OCI-LY7 (cell line): ENCODE measurements at regions of chr3 and their contacts with region 1.

Region 1: DNA sequence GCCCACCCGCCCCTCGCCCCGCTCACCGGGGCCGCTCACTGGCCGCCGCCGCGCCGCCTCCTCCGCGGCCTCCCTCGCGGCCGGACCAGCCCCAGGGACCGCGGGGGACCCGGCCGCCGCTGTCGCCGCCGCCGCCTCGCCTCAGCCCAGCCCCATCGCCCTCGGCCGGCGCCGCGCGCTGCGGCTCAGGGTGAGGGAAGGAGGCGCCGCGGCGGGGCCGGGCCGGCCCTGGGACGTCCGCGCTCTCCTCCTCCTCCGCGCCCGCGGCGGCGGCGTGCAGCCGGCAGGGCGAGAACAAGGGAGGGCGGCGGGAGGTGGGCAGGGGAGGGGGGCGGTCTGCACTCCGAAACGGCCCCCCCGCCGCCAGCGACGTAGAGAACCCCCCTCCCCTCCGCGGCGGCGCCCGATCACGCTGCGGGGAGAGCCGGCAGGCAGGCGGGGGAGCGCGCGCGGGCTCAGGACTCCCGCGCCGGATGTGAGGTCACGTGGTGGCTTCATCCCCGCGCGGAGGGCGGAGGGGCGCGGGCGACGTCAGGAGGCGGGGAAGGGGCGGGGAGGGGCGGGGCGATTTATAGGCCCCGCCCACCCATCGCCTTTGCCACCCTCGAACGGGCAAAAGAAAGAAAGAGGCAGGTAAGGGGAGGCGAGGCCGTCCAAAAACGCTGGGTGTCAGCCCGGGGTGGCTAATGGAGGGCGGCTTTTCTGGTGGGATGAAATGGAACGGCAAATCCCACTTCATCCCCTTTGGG is at the start of gene ATP13A3:
- DNase-seq: peak; percentile 96
- H3K4me3 ChIP-seq: peak within 1 kb of the TSS; percentile 73
- H3K27ac ChIP-seq: peak within 1 kb of the TSS; percentile 41
- H3K4me1 ChIP-seq: peaks cover 36% of the 10 kb centered on the region
- CTCF ChIP-seq: no peak
- total RNA-seq, gene ATP13A3: 84.5 and 103 TPM in 2 replicates

Region 2: GRCh38 chr3:194536871-194537637 is 50.3 kb after region 1 on chr3:
- CTCF ChIA-PET with region 1: no interaction called
- POLR2A ChIA-PET with region 1: no interaction called
- intact Hi-C with region 1: no loop called
- DNase-seq: no peak
- H3K4me3 ChIP-seq: no peak overlapping the region
- H3K27ac ChIP-seq: no peak overlapping the region
- H3K4me1 ChIP-seq: no peaks in the 10 kb centered on the region
- CTCF ChIP-seq: no peak

Region 3: DNA sequence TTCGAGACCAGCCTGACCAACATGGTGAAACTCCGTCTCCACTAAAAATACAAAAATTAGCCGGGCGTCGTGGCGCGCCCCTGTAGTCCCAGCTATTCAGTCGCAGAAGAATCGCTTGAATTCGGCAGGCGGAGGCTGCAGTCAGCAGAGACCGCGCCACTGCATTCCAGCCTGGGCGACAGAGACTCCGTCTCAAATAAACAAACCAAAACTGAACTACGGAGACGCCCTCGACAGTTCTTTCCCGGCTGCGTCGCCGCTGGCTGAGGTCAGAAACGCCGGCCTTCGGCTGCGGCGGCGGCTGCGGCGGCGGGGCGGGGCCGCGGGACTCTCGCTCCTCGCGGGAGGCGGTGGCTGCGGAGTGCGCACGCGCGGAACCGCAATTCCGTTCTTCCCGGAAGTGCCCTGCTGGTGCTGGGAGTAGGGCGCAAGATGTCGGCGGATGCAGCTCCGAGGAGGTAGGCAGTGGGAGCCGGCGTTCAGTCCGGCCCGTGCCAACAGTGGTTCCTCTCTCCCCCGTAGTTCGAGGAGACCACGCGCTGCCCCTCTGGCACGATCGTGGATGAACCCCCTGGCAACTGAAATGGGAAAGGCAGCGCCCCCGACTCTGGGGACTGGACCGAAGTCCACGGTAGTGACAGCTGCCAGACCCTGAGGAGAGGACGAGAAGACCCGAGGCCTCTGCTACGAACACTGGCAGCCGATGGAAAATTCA is 97.0 kb after region 1 on chr3:
- CTCF ChIA-PET with region 1: no interaction called
- POLR2A ChIA-PET with region 1: no interaction called
- intact Hi-C with region 1: loop called (anchors 5 kb)
- DNase-seq: peak; percentile 94
- H3K4me3 ChIP-seq: peak overlapping the region; percentile 91
- H3K27ac ChIP-seq: peak overlapping the region; percentile 24
- H3K4me1 ChIP-seq: peaks cover 11% of the 10 kb centered on the region
- CTCF ChIP-seq: no peak

Region 4: GRCh38 chr3:194769020-194769643 is 282.4 kb after region 1 on chr3:
- CTCF ChIA-PET with region 1: no interaction called
- POLR2A ChIA-PET with region 1: no interaction called
- intact Hi-C with region 1: loop called (anchors 5 kb)
- DNase-seq: peak; percentile 98
- H3K4me3 ChIP-seq: peak overlapping the region; percentile 58
- H3K27ac ChIP-seq: peak overlapping the region; percentile 27
- H3K4me1 ChIP-seq: peaks cover 15% of the 10 kb centered on the region
- CTCF ChIP-seq: no peak

Region 5: DNA sequence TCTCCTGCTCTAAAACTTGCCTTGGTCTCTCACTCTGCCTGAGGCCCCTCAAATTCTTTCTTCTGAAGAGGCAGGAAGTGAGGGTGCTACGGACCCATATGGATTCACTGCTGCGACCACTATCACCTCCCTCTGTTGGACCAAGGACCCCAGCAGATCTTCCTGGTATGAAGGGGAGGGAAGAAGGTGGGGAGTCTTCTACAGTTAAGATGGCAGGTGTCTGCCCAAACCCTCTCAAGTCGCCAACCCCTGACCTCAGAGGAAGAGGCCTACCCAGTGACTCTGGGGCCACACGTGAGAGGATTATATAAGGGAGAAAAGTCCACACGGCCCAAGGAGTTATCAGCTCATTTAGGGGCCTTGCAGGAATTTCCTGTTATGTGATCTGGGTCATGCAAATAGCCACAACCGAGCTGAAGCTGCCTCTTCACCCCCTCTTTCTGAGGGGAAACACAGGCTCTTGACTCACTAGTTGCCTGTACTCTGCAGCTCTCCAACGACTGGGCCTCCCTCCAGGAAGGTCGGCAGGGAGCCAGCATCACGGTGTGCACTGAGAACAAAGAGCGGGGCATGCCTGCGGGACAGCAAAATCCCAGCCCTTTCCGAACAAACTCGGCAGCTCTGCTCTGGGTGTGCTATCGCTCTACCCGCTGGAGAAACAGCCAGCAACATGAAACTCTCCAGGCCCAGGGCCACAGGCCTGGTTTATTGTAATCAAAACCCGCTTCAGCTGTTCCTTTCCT is 668.2 kb after region 1 on chr3:
- CTCF ChIA-PET with region 1: no interaction called
- POLR2A ChIA-PET with region 1: no interaction called
- intact Hi-C with region 1: loop called (anchors 10 kb)
- DNase-seq: peak; percentile 73
- H3K4me3 ChIP-seq: peak overlapping the region; percentile 19
- H3K27ac ChIP-seq: peak overlapping the region; percentile 95
- H3K4me1 ChIP-seq: peaks cover 78% of the 10 kb centered on the region
- CTCF ChIP-seq: no peak